ENCODE measurements at regions of chr6 and their contacts with region 1.

Region 1: DNA sequence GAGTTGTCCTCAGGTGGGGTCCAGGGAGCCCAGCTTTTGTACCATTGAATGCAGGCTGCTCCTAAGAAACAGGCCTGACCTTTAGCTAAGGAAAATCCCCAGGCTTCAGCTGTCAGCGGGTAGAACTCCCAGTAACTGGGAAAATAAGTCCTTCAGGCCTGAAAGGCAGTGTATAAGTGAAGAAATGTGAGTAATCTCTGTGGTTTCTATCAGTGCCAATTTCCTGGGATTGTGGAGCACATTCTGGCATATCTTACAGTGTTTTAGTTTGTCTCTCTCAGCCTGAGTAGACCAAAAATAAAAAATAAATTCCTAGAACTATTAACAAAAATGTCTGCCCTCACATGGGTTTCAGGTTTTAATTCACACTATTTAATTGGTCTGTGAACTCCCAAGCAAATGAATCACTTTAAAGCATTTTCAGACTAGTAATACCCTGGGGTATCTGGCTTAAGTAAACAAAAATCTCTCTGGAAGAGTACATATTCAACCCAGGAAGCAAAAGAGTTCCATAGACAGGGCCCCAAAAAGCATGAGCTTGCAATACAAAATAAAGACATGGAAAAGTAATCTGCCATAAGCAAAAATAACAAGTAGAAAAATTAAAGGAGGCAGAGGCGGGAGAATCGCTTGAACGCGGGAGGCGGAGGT is 566.2 kb upstream of the NOX3 start:
- DNase-seq: no peak
- H3K4me3 ChIP-seq: no peak overlapping the region
- H3K4me3 Mint-ChIP-seq: no peak overlapping the region
- H3K27ac ChIP-seq: no peak overlapping the region
- H3K27ac Mint-ChIP-seq: no peak overlapping the region
- H3K4me1 ChIP-seq: no peaks in the 10 kb centered on the region
- H3K4me1 Mint-ChIP-seq: peaks cover 2% of the 10 kb centered on the region
- H3K27me3 ChIP-seq: no peaks in the 10 kb centered on the region
- H3K27me3 Mint-ChIP-seq: no peaks in the 10 kb centered on the region
- CTCF ChIP-seq: no peak

Region 2: GRCh38 chr6:156065849-156066248 is 44.0 kb after region 1 on chr6:
- intact Hi-C with region 1: loop called in 1 of 2 experiments (anchors 2 kb)
- DNase-seq: no peak
- H3K4me3 ChIP-seq: no peak overlapping the region
- H3K4me3 Mint-ChIP-seq: no peak overlapping the region
- H3K27ac ChIP-seq: no peak overlapping the region
- H3K27ac Mint-ChIP-seq: no peak overlapping the region
- H3K4me1 ChIP-seq: no peaks in the 10 kb centered on the region
- H3K4me1 Mint-ChIP-seq: no peaks in the 10 kb centered on the region
- H3K27me3 ChIP-seq: no peaks in the 10 kb centered on the region
- H3K27me3 Mint-ChIP-seq: no peaks in the 10 kb centered on the region
- CTCF ChIP-seq: no peak